ENCODE measurements at regions of chr16 and their contacts with region 1.

Region 1: GRCh38 chr16:70770626-70771552 is 30.1 kb downstream of the VAC14 start:
- DNase-seq: peak; percentile 76
- H3K4me3 Mint-ChIP-seq: no peak overlapping the region
- H3K27ac Mint-ChIP-seq: no peak overlapping the region
- H3K4me1 Mint-ChIP-seq: peaks cover 12% of the 10 kb centered on the region
- H3K27me3 Mint-ChIP-seq: no peaks in the 10 kb centered on the region
- CTCF ChIP-seq: peak; percentile 96

Region 2: GRCh38 chr16:70653809-70654771 is 116.8 kb before region 1 on chr16:
- CTCF ChIA-PET with region 1: interaction called, 61 read pairs
- POLR2A ChIA-PET with region 1: interaction called, 9 read pairs
- intact Hi-C with region 1: loop called (anchors 1 kb)
- DNase-seq: peak; percentile 89
- H3K4me3 Mint-ChIP-seq: peak overlapping the region; percentile 45
- H3K27ac Mint-ChIP-seq: no peak overlapping the region
- H3K4me1 Mint-ChIP-seq: peaks cover 11% of the 10 kb centered on the region
- H3K27me3 Mint-ChIP-seq: no peaks in the 10 kb centered on the region
- CTCF ChIP-seq: peak; percentile 78

Region 3: GRCh38 chr16:70679666-70680494 is 91.0 kb before region 1 on chr16:
- CTCF ChIA-PET with region 1: interaction called, 121 read pairs
- POLR2A ChIA-PET with region 1: interaction called, 8 read pairs
- intact Hi-C with region 1: loop called (anchors 2 kb)
- DNase-seq: no peak
- H3K4me3 Mint-ChIP-seq: no peak overlapping the region
- H3K27ac Mint-ChIP-seq: no peak overlapping the region
- H3K4me1 Mint-ChIP-seq: peaks cover 5% of the 10 kb centered on the region
- H3K27me3 Mint-ChIP-seq: no peaks in the 10 kb centered on the region
- CTCF ChIP-seq: peak; percentile 30

Region 4: DNA sequence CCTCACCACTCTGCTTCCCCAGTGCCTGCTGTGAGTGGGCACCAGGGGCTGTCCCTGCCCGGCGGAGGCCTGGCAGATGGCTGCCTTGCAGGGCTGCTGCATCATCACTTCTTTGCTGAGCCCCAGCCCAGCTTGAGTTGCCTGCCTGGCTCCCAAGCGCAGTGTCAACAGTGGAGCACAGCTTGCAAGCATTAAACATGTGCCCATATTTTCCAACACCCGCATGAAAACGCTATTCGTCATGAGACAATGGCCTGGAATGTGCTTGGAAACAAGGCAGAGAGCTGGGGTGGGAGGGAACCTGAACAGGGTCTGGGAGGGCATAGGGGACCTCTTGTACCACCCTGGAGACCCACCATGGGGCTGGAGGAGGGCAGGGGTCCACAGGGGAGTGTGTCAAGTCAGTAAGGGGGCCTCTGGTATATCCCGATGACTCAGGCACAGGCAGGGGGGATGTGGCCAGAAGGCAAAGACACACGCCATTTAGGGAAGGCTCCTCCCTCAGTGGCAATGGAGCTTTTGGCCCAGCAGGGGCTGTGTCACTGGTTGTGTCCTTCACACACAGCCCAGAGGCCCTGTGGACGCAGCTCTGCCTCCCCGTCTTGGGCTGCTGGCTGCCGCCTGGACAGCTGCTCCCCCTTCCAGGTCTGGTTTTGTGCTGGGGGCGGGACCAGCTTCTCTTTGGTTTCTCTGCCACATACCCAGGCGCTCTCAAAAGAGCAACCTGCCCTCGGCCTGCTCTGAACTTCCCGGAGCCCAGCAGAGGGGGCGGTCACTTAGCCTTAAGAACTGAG is 67.7 kb before region 1 on chr16:
- CTCF ChIA-PET with region 1: interaction called, 15 read pairs
- POLR2A ChIA-PET with region 1: interaction called, 3 read pairs
- intact Hi-C with region 1: no loop called
- DNase-seq: no peak
- H3K4me3 Mint-ChIP-seq: no peak overlapping the region
- H3K27ac Mint-ChIP-seq: no peak overlapping the region
- H3K4me1 Mint-ChIP-seq: peaks cover 39% of the 10 kb centered on the region
- H3K27me3 Mint-ChIP-seq: no peaks in the 10 kb centered on the region
- CTCF ChIP-seq: no peak

Region 5: DNA sequence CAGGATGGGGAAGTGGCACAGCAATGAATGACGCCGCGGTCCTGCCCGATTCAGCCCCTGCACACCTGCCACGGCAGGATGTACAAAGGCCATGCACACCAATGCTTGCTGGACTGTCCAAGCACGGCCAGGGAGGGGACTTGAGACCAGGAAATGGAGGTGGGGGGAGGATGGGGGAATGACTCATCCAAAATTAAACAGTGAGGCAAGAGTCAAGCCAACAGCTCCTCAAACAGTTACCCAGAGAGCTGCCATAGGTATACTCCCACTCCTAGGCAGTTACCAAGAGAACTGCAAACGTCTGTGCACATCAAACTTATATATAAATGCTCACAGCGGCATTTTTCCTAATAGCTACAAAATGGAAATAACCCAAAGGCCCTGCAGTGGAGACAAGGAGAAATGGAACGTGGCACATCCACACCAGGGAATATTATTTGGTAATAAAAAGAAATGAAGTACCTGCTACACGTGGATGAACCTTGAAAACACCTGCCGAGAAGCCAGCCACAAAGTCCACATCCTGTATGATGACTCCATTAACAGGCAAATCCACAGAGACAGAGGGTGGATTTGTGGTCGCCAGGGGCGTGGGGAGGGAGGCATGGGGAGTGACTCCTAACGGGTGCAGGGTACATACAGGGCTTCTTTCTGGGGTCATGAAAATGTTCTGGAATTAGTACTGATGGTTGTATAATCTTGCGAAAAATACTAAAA is 24.0 kb before region 1 on chr16:
- CTCF ChIA-PET with region 1: interaction called, 23 read pairs
- POLR2A ChIA-PET with region 1: interaction called, 4 read pairs
- intact Hi-C with region 1: no loop called
- DNase-seq: peak; percentile 96
- H3K4me3 Mint-ChIP-seq: peak overlapping the region; percentile 22
- H3K27ac Mint-ChIP-seq: peak overlapping the region; percentile 44
- H3K4me1 Mint-ChIP-seq: peaks cover 32% of the 10 kb centered on the region
- H3K27me3 Mint-ChIP-seq: no peaks in the 10 kb centered on the region
- CTCF ChIP-seq: no peak

Measured in MCF 10A (cell line).